CD8-positive, alpha-beta T cell (primary cell): ENCODE measurements at regions of chr2 and their contacts with region 1.

Region 1: DNA sequence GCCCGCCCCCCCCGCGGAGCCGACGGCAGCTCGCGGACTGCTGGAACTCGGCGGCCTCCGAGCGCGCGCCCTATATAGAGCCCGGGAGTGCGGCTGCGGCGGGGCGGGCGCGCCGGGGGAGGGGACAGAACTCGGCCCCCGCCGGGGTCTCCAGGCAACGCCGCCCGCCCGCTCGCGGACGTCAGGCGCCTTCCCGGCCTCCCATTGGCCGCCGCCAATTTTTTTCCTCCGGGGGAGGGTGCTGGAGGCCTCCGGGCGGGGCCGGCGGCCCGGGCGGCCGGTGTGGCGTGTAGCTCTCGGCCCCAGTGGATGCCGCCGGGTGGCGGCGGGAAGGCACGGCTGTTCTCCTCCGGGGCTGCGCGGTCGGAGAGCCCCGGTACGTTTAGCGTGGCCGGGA is at the start of gene ZFP36L2:
- DNase-seq: peak; percentile 89 to 99 (median 96)
- ATAC-seq: peak; percentile 58
- H3K4me3 ChIP-seq: peak within 1 kb of the TSS; percentile 89 to 94
- H3K4me3 Mint-ChIP-seq: peak within 1 kb of the TSS; percentile 96
- H3K27ac ChIP-seq: peak within 1 kb of the TSS; percentile 81 to 92
- H3K27ac Mint-ChIP-seq: peak within 1 kb of the TSS; percentile 94
- H3K4me1 ChIP-seq: peaks cover 23% of the 10 kb centered on the region
- H3K4me1 Mint-ChIP-seq: peaks cover 28% of the 10 kb centered on the region
- H3K27me3 ChIP-seq: no peaks in the 10 kb centered on the region
- H3K27me3 Mint-ChIP-seq: no peaks in the 10 kb centered on the region
- CTCF ChIP-seq: no peak
- total RNA-seq, gene ZFP36L2: 1,270 to 1,311 TPM

Region 2: DNA sequence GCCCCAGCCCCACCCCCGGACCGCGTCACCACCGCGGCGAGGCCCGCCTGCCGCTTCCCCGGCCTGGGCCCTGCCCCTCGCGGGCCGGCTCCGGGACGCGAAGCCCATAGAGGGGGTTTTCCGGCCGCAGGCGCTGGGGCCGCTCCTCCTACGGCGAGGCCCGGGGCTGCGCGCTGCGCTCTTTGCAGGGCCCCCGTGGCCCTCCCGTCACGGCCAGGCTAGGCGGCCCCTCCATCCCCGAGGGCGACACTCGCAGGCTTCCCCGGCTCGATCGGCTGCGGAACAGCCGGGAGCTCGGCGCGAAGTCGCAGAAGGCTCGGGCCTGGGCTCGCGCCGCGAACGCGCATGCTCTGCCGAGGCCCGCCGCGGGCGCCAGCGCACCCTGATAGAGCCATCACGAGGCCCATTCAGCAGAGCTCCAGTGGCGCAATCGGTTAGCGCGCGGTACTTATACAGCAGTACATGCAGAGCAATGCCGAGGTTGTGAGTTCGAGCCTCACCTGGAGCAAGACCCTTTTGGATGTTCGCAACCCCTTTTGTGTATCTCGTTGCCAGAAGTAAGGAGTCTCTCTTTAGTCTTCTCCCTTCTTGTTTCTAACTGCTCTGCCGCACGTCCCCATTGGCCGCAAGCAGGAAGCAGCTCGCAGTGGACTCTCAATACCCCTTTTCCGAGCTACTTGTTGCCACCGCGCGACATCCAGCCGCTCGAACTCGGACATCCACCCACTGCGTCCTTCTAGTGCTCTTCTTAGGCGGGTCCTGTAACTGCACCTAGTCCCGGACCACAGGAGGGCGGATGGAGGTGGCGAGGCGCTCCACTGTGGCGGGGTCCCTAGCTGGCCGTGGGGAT is 416.2 kb before region 1 on chr2:
- CTCF ChIA-PET with region 1: no interaction called
- POLR2A ChIA-PET with region 1: interaction called, 10 read pairs
- intact Hi-C with region 1: loop called in 1 of 2 experiments (anchors 1 kb)
- DNase-seq: peak; percentile 94 to 99 (median 95)
- ATAC-seq: peak; percentile 78
- H3K4me3 ChIP-seq: peak overlapping the region; percentile 94 to 99
- H3K4me3 Mint-ChIP-seq: peak overlapping the region; percentile 98
- H3K27ac ChIP-seq: peak overlapping the region; percentile 94 to 96
- H3K27ac Mint-ChIP-seq: peak overlapping the region; percentile 97
- H3K4me1 ChIP-seq: peaks cover 7% of the 10 kb centered on the region
- H3K4me1 Mint-ChIP-seq: peaks cover 23% of the 10 kb centered on the region
- H3K27me3 ChIP-seq: no peaks in the 10 kb centered on the region
- H3K27me3 Mint-ChIP-seq: no peaks in the 10 kb centered on the region
- CTCF ChIP-seq: no peak

Region 3: GRCh38 chr2:42954227-42954962 is 272.2 kb before region 1 on chr2:
- CTCF ChIA-PET with region 1: interaction called, 19 read pairs
- POLR2A ChIA-PET with region 1: no interaction called
- intact Hi-C with region 1: no loop called
- DNase-seq: no peak
- ATAC-seq: no peak
- H3K4me3 ChIP-seq: no peak overlapping the region
- H3K4me3 Mint-ChIP-seq: no peak overlapping the region
- H3K27ac ChIP-seq: no peak overlapping the region
- H3K27ac Mint-ChIP-seq: no peak overlapping the region
- H3K4me1 ChIP-seq: no peaks in the 10 kb centered on the region
- H3K4me1 Mint-ChIP-seq: no peaks in the 10 kb centered on the region
- H3K27me3 ChIP-seq: no peaks in the 10 kb centered on the region
- H3K27me3 Mint-ChIP-seq: no peaks in the 10 kb centered on the region
- CTCF ChIP-seq: no peak

Region 4: DNA sequence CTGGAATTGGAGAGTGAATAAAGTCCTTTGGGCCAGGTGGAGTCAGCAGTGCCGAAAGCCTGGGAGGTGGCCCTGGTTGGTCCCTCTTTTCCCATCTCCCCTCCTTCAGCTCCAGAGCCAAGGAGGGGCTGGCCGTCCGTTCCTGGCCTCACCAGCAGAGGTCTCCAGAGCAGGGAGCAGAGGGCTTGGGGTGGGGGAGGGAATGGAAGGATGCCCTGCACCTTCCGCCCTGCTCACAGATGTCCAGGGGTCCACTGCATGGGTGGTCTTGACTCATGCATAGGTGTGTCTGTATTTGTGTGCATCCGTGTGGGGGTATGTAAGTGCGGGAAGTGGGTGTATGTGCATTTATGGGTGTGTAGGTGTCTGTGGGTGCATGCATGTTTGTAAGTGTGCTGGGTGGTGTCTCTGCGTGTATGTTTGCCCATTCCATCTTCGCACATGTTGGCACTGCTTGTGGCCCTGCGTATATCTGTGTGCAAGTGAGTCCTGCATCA is 202.0 kb before region 1 on chr2:
- CTCF ChIA-PET with region 1: interaction called, 27 read pairs
- POLR2A ChIA-PET with region 1: interaction called, 3 read pairs
- intact Hi-C with region 1: loop called (anchors 1 to 2 kb)
- DNase-seq: peak in 8 of 9 experiments; percentile 6 to 67 (median 38)
- ATAC-seq: peak; percentile 55
- H3K4me3 ChIP-seq: no peak overlapping the region
- H3K4me3 Mint-ChIP-seq: no peak overlapping the region
- H3K27ac ChIP-seq: no peak overlapping the region
- H3K27ac Mint-ChIP-seq: no peak overlapping the region
- H3K4me1 ChIP-seq: peaks cover 13% of the 10 kb centered on the region
- H3K4me1 Mint-ChIP-seq: peaks cover 24% of the 10 kb centered on the region
- H3K27me3 ChIP-seq: no peaks in the 10 kb centered on the region
- H3K27me3 Mint-ChIP-seq: no peaks in the 10 kb centered on the region
- CTCF ChIP-seq: no peak

Region 5: DNA sequence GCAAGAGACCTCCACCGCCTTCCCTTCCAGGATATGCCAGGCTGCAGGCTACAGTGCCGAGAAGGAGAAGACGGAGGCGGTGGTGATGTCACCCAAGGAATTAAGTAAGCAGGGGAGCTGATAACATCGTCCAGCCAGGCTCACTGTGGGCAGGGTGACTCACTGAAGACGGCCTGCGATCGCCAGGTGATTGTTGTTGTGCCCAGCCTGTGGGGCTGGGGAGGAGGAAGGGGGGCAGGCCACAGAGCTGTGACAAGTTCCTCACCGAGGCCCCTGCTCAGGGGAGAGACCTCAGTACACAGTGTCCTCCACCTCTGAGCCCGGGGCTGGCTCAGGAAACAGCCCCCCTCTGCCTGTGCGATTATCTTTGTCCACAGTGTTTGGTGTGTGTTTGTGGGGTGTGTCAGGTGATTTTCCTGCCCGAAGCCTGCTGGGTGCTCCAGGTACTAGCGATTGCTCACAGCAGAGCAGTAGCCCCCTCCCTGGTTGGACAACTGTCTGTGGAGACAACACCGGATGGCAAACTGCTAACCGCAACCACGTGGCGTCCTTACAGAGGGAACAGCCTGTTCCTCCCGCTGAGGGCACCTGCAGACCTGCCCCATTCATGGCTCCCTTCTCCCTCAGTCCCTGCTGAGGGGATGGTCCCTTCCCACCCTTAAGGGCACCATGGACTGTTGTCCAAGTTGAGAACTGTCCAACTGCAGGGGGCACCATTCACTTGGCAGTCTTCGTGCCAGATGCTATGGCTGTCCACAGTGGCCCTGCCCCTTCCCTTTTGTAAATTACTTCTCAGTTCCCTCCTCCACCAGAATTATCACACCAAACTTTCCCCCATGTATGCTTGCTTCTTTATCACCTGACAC is 95.3 kb before region 1 on chr2:
- CTCF ChIA-PET with region 1: interaction called, 666 read pairs
- POLR2A ChIA-PET with region 1: interaction called, 1,192 read pairs
- intact Hi-C with region 1: loop called (anchors 1 kb)
- DNase-seq: peak; percentile 64 to 95 (median 90)
- ATAC-seq: peak; percentile 51
- H3K4me3 ChIP-seq: peak overlapping the region; percentile 12 to 44
- H3K4me3 Mint-ChIP-seq: peak overlapping the region; percentile 60
- H3K27ac ChIP-seq: peak overlapping the region; percentile 88 to 90
- H3K27ac Mint-ChIP-seq: peak overlapping the region; percentile 100
- H3K4me1 ChIP-seq: peaks cover 97% of the 10 kb centered on the region
- H3K4me1 Mint-ChIP-seq: peaks cover 89% of the 10 kb centered on the region
- H3K27me3 ChIP-seq: no peaks in the 10 kb centered on the region
- H3K27me3 Mint-ChIP-seq: no peaks in the 10 kb centered on the region
- CTCF ChIP-seq: peak; percentile 21

Region 6: GRCh38 chr2:43158259-43158880 is 68.2 kb before region 1 on chr2:
- CTCF ChIA-PET with region 1: interaction called, 537 read pairs
- POLR2A ChIA-PET with region 1: interaction called, 828 read pairs
- intact Hi-C with region 1: no loop called
- DNase-seq: peak in 5 of 9 experiments; percentile 53 to 81 (median 64)
- ATAC-seq: peak; percentile 48
- H3K4me3 ChIP-seq: peak overlapping the region; percentile 9 to 16
- H3K4me3 Mint-ChIP-seq: peak overlapping the region; percentile 75
- H3K27ac ChIP-seq: peak overlapping the region; percentile 60 to 90
- H3K27ac Mint-ChIP-seq: peak overlapping the region; percentile 96
- H3K4me1 ChIP-seq: peaks cover 88% of the 10 kb centered on the region
- H3K4me1 Mint-ChIP-seq: peaks cover 85% of the 10 kb centered on the region
- H3K27me3 ChIP-seq: no peaks in the 10 kb centered on the region
- H3K27me3 Mint-ChIP-seq: no peaks in the 10 kb centered on the region
- CTCF ChIP-seq: no peak

Region 7: GRCh38 chr2:43265001-43265400 is 38.4 kb after region 1 on chr2:
- CTCF ChIA-PET with region 1: no interaction called
- POLR2A ChIA-PET with region 1: no interaction called
- intact Hi-C with region 1: no loop called
- DNase-seq: no peak
- ATAC-seq: no peak
- H3K4me3 ChIP-seq: no peak overlapping the region
- H3K4me3 Mint-ChIP-seq: no peak overlapping the region
- H3K27ac ChIP-seq: no peak overlapping the region
- H3K27ac Mint-ChIP-seq: no peak overlapping the region
- H3K4me1 ChIP-seq: no peaks in the 10 kb centered on the region
- H3K4me1 Mint-ChIP-seq: no peaks in the 10 kb centered on the region
- H3K27me3 ChIP-seq: no peaks in the 10 kb centered on the region
- H3K27me3 Mint-ChIP-seq: no peaks in the 10 kb centered on the region
- CTCF ChIP-seq: no peak

Region 8: DNA sequence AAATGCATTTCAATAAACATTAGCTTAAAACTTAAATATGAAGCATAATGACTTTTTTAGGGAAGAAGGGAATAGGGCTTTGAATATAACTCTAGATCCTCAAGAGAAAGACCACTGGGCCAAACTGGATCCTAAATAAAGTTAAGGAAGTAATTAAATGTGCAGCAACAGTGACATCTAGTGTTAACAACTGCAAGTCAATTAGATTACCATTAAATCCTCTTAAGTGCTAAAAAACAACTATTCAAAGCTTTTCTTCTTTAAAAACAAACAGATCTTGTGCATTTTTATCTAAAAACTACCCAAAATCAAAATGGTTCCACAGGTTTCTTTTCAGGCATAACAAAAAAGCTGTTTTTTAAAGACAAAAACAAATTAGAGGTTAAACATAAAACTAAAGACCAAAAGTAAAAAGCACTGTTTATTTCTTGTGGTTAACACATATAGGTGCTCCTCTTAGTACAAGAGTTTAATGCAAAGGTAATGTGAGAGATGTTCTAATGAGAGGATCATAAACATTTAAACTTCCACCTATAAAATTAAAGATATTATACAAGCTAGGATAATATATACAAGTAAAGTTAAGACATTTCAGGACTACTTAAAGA is 257.9 kb after region 1 on chr2:
- CTCF ChIA-PET with region 1: interaction called, 22 read pairs
- POLR2A ChIA-PET with region 1: interaction called, 7 read pairs
- intact Hi-C with region 1: loop called (anchors 1 to 2 kb)
- DNase-seq: peak in 2 of 9 experiments; percentile 73 to 82
- ATAC-seq: peak; percentile 34
- H3K4me3 ChIP-seq: no peak overlapping the region
- H3K4me3 Mint-ChIP-seq: no peak overlapping the region
- H3K27ac ChIP-seq: no peak overlapping the region
- H3K27ac Mint-ChIP-seq: no peak overlapping the region
- H3K4me1 ChIP-seq: no peaks in the 10 kb centered on the region
- H3K4me1 Mint-ChIP-seq: peaks cover 11% of the 10 kb centered on the region
- H3K27me3 ChIP-seq: no peaks in the 10 kb centered on the region
- H3K27me3 Mint-ChIP-seq: no peaks in the 10 kb centered on the region
- CTCF ChIP-seq: peak; percentile 84